ENCODE measurements at regions of chr19 and their contacts with region 1.

Region 1: DNA sequence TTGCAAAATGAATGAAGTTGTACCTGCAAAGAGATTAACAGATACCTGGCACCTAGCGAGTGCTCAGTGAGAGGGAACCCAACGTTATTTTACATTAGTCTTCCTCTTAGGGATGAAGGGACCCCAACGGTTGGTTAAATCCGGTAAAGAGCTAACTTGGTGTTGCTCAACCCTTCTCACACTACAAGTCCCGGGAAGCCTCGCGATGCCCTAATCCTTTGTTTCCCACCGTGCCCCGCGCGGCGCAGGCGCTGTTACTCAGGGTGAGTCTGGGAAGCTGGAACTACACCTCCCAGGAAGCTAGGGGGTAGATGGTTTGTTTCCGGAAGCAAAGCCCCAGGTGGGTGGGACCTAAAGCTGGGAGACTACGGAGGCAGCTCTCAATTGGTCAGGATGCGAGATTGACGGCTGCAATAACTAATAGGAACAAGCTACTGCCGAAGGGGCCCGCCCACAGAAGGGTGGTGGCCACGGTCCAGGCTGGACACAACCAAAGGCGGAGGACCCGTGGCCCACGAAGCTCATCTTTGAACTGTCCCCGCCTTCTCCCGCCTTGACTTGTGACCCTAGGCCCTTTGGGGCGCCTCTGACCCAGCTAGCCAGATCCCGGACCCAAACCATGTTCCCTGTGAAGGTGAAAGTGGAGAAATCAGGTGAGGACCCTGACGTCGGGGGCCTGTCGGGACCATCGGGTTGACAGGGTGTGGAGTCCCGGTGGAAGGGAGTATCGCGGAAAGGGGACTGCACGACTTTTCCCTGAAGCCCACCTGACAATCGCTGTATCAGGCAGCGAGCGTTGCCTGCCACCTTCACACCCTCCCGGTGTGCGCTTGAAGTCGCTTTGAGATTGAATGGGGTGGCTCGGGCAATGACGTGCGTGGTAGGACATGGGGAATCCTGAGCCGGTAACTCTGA is at the start of gene LIN37:
- DNase-seq: peak; percentile 99
- H3K4me3 Mint-ChIP-seq: peak within 1 kb of the TSS; percentile 97
- H3K27ac Mint-ChIP-seq: peak within 1 kb of the TSS; percentile 89
- H3K4me1 Mint-ChIP-seq: peaks cover 43% of the 10 kb centered on the region
- H3K27me3 Mint-ChIP-seq: peaks cover 2% of the 10 kb centered on the region
- total RNA-seq, gene LIN37: 9.3 and 9.8 TPM in 2 replicates

Region 2: DNA sequence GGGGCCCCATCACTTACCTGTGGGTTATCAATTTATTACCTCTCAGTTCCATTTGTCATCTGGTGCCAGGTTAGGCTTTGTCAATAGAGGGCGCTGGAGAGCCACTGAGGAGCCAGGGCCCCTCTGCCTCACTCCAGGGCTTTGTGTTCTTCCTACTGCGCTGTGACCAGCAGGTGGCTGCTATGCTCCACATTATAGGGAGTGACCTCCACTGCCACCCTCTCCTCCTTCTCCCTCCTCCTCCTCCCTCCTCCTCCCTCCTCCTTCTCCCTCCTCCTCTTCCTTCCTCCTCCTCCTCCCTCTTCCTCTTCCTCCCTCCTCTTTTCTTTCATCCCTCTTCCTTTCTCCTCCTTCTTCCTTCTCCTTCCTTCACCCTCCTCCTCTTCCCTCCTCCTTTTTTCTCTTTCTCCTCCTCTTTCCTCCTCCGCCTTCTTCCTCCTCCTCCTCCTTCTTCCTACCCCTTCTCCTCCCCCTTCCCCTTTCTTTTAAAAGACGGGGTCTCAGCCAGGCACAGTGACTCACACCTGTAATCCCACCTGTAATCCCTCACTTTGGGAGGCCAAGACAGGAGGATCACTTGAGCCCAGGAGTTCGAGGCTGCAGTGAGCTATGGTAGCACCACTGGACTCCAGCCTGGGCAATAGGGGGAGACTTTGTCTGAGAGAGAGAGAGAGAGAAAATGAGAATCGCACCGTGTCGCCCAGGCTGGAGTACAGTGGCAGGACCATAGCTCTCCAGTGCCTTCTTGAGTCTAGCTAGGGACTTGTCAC is 54.3 kb before region 1 on chr19:
- intact Hi-C with region 1: loop called (anchors 1 kb)
- DNase-seq: peak; percentile 86
- H3K4me3 Mint-ChIP-seq: no peak overlapping the region
- H3K27ac Mint-ChIP-seq: peak overlapping the region; percentile 38
- H3K4me1 Mint-ChIP-seq: peaks cover 27% of the 10 kb centered on the region
- H3K27me3 Mint-ChIP-seq: no peaks in the 10 kb centered on the region

Region 3: DNA sequence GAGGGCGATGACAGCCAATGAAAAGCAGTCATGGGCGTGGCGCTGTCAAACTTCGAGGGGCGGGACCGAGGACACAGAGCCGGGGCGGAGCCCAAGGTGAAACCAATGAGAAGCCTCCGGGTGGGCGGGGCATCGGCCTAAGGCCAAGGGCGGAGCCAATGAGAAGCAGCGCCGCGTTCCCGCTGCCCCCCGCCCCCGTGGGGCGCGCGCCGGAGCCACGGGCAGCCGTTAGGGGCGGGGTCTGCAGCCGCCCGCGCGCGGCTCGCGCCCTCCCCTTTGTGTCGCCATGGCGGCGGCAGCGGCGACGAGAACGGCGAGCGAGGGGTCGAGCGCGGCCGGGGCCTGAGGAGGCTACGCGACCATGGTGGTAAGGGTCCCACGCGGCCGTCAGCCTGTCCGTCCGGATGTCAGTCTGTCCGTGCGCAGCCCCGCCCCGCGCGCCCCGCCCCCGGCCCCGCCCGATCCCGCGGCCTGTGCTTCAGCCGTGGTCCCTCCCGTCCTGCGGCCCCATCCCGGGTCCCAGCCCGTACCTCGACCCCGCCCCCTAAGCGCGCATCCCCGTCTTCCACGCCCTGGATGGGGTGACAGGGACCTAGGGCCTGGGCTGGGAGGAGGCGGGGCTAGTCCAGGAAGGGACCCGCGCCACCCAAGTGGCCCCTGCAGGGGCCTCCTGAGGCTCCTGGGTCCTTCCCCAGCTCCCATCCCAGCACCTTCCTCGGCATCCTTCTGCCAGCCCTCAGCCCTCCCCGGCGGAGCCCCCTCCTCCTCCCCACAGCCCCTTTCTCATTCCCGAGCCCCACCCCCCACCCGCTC is 27.1 kb after region 1 on chr19 and contains the start of gene ARHGAP33:
- intact Hi-C with region 1: loop called (anchors 1 kb)
- DNase-seq: peak; percentile 99
- H3K4me3 Mint-ChIP-seq: peak within 1 kb of the TSS; percentile 85
- H3K27ac Mint-ChIP-seq: peak within 1 kb of the TSS; percentile 61
- H3K4me1 Mint-ChIP-seq: peaks cover 29% of the 10 kb centered on the region
- H3K27me3 Mint-ChIP-seq: no peaks in the 10 kb centered on the region
- total RNA-seq, gene ARHGAP33: 24.5 and 25.8 TPM in 2 replicates

Region 4: GRCh38 chr19:36014029-36014924 is 265.9 kb after region 1 on chr19 and contains the start of gene ALKBH6:
- intact Hi-C with region 1: loop called (anchors 2 kb)
- DNase-seq: peak; percentile 100
- H3K4me3 Mint-ChIP-seq: peak within 1 kb of the TSS; percentile 98
- H3K27ac Mint-ChIP-seq: peak within 1 kb of the TSS; percentile 96
- H3K4me1 Mint-ChIP-seq: peaks cover 46% of the 10 kb centered on the region
- H3K27me3 Mint-ChIP-seq: no peaks in the 10 kb centered on the region
- total RNA-seq, gene ALKBH6: 48.3 and 60.6 TPM in 2 replicates